ENCODE measurements at regions of chr1 and their contacts with region 1.

Region 1: GRCh38 chr1:51296383-51297357 is 33.7 kb downstream of the TTC39A start:
- DNase-seq: peak; percentile 91
- H3K4me3 ChIP-seq: peak overlapping the region in 1 of 2 experiments; percentile 17; a peak in 1 of 4 replicates
- H3K27ac ChIP-seq: no peak overlapping the region
- H3K4me1 ChIP-seq: peaks cover 0 to 3% of the 10 kb centered on the region in 2 experiments; a peak in 1 of 4 replicates
- H3K27me3 ChIP-seq: no peaks in the 10 kb centered on the region
- CTCF ChIP-seq: peak; percentile 94
- EP300 ChIP-seq: no peak
- RAD21 ChIP-seq: peak; percentile 86

Region 2: GRCh38 chr1:51255331-51255730 is 41.3 kb before region 1 on chr1:
- CTCF ChIA-PET with region 1: interaction called, 16 read pairs
- POLR2A ChIA-PET with region 1: no interaction called
- DNase-seq: no peak
- H3K4me3 ChIP-seq: no peak overlapping the region
- H3K27ac ChIP-seq: no peak overlapping the region
- H3K4me1 ChIP-seq: peaks cover 2 to 3% of the 10 kb centered on the region in 2 experiments; a peak in 3 of 4 replicates
- H3K27me3 ChIP-seq: no peaks in the 10 kb centered on the region
- CTCF ChIP-seq: no peak
- EP300 ChIP-seq: no peak
- RAD21 ChIP-seq: no peak

Region 3: GRCh38 chr1:51276286-51276685 is 20.4 kb before region 1 on chr1:
- CTCF ChIA-PET with region 1: interaction called, 11 read pairs
- POLR2A ChIA-PET with region 1: no interaction called
- DNase-seq: no peak
- H3K4me3 ChIP-seq: no peak overlapping the region
- H3K27ac ChIP-seq: no peak overlapping the region
- H3K4me1 ChIP-seq: 0 out of 4 replicates have a peak, but pooled peaks cover 0 to 4% of the 10 kb centered on the region in 2 experiments
- H3K27me3 ChIP-seq: no peaks in the 10 kb centered on the region
- CTCF ChIP-seq: no peak
- EP300 ChIP-seq: no peak
- RAD21 ChIP-seq: no peak

Region 4: GRCh38 chr1:51283979-51284378 is 12.7 kb before region 1 on chr1:
- CTCF ChIA-PET with region 1: interaction called, 26 read pairs
- POLR2A ChIA-PET with region 1: no interaction called
- DNase-seq: no peak
- H3K4me3 ChIP-seq: no peak overlapping the region
- H3K27ac ChIP-seq: no peak overlapping the region
- H3K4me1 ChIP-seq: peaks cover 8 to 16% of the 10 kb centered on the region in 2 experiments; a peak in 3 of 4 replicates
- H3K27me3 ChIP-seq: no peaks in the 10 kb centered on the region
- CTCF ChIP-seq: no peak
- EP300 ChIP-seq: no peak
- RAD21 ChIP-seq: no peak

Region 5: GRCh38 chr1:51313961-51314777 is 17.5 kb after region 1 on chr1:
- CTCF ChIA-PET with region 1: interaction called, 11 read pairs
- POLR2A ChIA-PET with region 1: no interaction called
- DNase-seq: no peak
- H3K4me3 ChIP-seq: no peak overlapping the region
- H3K27ac ChIP-seq: peak overlapping the region in 1 of 2 experiments; percentile 69; a peak in 2 of 4 replicates
- H3K4me1 ChIP-seq: peaks cover 0 to 10% of the 10 kb centered on the region in 2 experiments; a peak in 3 of 4 replicates
- H3K27me3 ChIP-seq: no peaks in the 10 kb centered on the region
- CTCF ChIP-seq: no peak
- EP300 ChIP-seq: no peak
- RAD21 ChIP-seq: no peak